Activated CD4-positive, alpha-beta T cell treated with anti-CD3 and anti-CD28 coated beads, Interleukin-2, amount 10 ng/mL, durations not matched to agents 7 days and 5 days (primary cell): ENCODE measurements at regions of chr13 and their contacts with region 1.

Region 1: DNA sequence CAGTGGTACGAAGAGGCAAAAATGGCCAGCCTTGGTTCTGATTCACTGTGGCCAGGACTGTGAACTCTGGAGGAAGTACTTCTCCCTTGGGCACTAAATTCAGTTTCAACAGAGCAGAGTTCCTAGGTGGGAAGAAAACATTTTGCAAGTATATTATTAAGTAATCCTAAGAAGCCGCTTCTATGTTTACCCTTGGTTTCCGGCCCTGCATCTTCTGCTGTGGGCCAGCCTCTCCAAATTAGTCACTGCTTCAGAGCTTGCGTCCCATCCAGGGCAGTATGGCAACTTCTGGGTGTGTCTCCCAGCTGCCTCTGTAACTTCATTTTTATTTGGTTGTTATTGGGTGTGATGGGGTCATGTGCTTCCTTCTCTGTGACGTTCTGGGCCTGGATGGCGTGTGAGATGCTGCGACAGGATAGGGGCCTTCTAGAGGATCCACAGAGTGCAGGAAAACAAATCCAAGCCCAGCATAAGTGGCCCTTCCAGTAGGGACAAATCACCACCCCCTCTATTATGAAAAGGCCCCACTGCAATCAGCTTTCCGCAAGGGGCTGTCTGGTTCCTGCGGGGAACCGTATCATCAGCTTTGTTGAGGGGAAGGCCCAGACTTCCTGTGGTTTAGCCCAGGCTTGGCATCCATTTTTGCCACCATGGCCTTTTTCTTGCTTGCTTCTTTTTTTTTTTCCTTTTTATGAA is 55.1 kb upstream of the C1QTNF9 start:
- DNase-seq: peak; percentile 69
- H3K4me3 Mint-ChIP-seq: peak overlapping the region; percentile 92
- H3K27ac Mint-ChIP-seq: peak overlapping the region; percentile 93
- H3K4me1 Mint-ChIP-seq: peaks cover 85% of the 10 kb centered on the region
- H3K27me3 Mint-ChIP-seq: no peaks in the 10 kb centered on the region

Region 2: DNA sequence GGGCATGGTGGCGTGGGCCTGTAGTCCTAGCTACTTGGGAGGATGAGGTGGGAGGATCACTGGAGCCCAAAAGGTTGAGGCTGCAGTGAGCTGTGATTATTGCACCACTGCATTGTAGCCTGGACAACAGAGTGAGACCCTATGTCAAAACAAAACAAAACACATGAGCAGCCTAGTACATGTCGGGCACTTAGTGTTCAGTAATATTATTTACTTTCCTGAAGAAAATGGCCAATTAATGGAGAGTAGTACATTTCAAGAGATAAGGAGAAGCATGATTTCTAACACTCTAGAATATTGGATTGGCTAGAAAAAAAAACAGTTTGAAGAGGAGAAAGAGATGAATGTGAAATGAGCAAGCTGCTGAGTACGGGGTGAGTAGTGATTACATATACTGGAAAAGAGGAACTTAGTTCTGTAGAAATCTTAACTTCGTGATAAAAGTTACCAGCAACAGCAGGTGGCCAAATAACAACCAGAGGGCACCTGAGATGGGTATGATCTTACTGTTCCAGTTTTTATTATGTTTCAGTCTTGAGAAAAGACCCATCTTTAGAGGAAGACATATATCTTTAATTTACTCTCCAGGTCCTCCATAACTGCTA is 57.6 kb before region 1 on chr13:
- CTCF ChIA-PET with region 1: no interaction called
- POLR2A ChIA-PET with region 1: interaction called, 10 read pairs
- DNase-seq: no peak
- H3K4me3 Mint-ChIP-seq: no peak overlapping the region
- H3K27ac Mint-ChIP-seq: no peak overlapping the region
- H3K4me1 Mint-ChIP-seq: peaks cover 3% of the 10 kb centered on the region
- H3K27me3 Mint-ChIP-seq: no peaks in the 10 kb centered on the region

Region 3: GRCh38 chr13:24207841-24208667 is 46.2 kb before region 1 on chr13:
- CTCF ChIA-PET with region 1: no interaction called
- POLR2A ChIA-PET with region 1: no interaction called
- DNase-seq: no peak
- H3K4me3 Mint-ChIP-seq: no peak overlapping the region
- H3K27ac Mint-ChIP-seq: no peak overlapping the region
- H3K4me1 Mint-ChIP-seq: peaks cover 30% of the 10 kb centered on the region
- H3K27me3 Mint-ChIP-seq: no peaks in the 10 kb centered on the region

Region 4: DNA sequence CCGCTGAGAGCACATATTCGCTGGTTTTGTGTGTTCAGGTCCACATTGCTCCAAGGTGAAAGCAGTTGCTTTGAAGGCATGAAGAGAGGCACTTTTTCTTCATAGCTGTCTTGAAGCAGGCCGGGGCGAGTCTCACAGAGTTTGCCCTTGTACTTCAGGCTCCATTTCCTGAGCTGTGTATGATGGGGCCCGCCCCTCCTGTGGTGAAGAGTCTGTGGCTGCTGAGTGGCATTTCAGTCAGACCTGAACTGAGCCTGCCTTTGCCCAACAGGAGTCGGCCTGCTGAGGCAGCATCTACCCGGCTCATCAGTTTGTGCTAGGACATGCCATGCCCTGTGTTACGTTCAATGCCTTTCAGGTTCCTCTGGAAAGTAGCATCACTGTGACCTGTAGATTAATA is 10.7 kb after region 1 on chr13:
- CTCF ChIA-PET with region 1: interaction called, 18 read pairs
- POLR2A ChIA-PET with region 1: interaction called, 8 read pairs
- DNase-seq: peak; percentile 91
- H3K4me3 Mint-ChIP-seq: peak overlapping the region; percentile 69
- H3K27ac Mint-ChIP-seq: peak overlapping the region; percentile 96
- H3K4me1 Mint-ChIP-seq: peaks cover 93% of the 10 kb centered on the region
- H3K27me3 Mint-ChIP-seq: no peaks in the 10 kb centered on the region

Region 5: DNA sequence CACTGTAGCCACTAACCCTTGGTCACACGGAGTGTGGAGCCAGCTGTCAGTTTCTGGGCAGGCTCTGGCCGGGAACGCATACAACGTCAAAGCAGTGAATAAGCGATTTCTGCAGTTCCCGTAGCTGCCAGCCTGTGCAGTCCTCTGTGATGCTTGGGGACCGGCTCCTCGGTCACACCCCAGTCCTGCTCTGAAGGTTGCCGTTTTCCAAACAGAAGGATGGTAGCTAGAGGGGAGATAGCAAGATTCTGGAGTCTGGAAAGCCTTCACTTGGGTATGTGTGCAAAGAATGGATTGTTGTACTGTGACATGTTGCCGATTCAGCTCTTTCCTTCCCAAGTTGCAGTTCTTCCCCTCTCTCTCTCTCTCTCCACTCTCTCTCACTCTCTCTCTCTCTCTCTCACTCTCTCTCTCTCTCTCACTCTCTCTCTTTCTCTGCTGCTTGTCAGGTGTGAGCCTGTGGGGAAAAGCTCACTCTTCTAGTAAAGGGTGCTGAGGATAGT is 16.4 kb after region 1 on chr13:
- CTCF ChIA-PET with region 1: interaction called, 18 read pairs
- POLR2A ChIA-PET with region 1: interaction called, 8 read pairs
- DNase-seq: peak; percentile 67
- H3K4me3 Mint-ChIP-seq: peak overlapping the region; percentile 90
- H3K27ac Mint-ChIP-seq: peak overlapping the region; percentile 98
- H3K4me1 Mint-ChIP-seq: peaks cover 89% of the 10 kb centered on the region
- H3K27me3 Mint-ChIP-seq: peaks cover 2% of the 10 kb centered on the region